Aorta (tissue), 5 donors: ENCODE measurements at regions of chr9 and their contacts with region 1.

Region 1: GRCh38 chr9:34126207-34127034 is at the start of gene DCAF12:
- DNase-seq: peak; percentile 95 to 97
- ATAC-seq: peak; percentile 98
- H3K4me3 ChIP-seq: peak within 1 kb of the TSS; percentile 74 to 91
- H3K27ac ChIP-seq: peak within 1 kb of the TSS; percentile 20 to 79
- H3K4me1 ChIP-seq: no peaks in the 10 kb centered on the region
- H3K27me3 ChIP-seq: no peaks in the 10 kb centered on the region
- total RNA-seq, gene DCAF12: 20.6 to 35.2 TPM

Region 2: DNA sequence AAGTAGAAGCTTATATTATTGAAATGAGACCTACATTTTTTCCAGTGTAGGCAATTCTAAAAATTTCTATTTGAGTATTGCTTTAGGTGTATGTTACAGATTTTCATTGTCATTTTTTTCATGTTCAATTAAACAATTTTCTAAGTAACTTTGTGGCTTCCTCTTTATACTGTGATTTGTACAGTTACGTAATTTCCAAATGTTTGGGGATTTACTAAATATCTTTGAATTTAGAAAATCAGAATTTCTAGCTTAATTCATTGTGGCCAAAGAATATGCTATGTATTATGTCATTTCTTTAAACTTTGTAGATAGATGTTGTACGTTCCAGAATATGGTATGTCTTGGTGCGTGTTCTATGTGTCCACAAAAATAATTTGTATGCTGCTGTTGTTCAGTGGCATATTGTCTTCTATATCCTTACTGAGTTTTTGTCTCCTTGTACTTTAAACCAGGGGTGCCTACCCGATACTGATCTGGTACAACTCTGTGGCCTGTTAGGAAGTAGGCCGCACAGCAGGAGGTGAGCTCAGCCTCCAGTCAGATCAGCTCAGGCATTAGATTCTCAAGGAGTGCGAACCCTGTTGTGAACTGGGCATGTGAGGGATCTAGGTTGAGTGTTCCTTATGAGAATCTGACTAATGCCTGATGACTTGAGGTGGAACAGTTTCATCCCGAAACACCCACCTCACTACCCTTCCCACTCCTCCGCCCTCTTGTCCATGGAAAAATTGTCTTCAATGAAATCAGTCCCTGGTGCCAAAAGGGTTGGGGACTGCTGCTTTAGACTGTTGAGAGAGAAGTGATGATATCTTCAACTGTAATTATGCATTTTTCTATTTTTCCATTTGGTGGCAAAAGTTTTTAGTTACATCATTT is 246.0 kb before region 1 on chr9:
- intact Hi-C with region 1: no loop called
- DNase-seq: no peak
- ATAC-seq: no peak
- H3K4me3 ChIP-seq: no peak overlapping the region
- H3K27ac ChIP-seq: no peak overlapping the region
- H3K4me1 ChIP-seq: peaks cover 2 to 5% of the 10 kb centered on the region in 2 donors
- H3K27me3 ChIP-seq: no peaks in the 10 kb centered on the region

Region 3: GRCh38 chr9:33964086-33964768 is 162.2 kb before region 1 on chr9:
- intact Hi-C with region 1: no loop called
- DNase-seq: no peak
- ATAC-seq: no peak
- H3K4me3 ChIP-seq: no peak overlapping the region
- H3K27ac ChIP-seq: no peak overlapping the region
- H3K4me1 ChIP-seq: no peaks in the 10 kb centered on the region
- H3K27me3 ChIP-seq: no peaks in the 10 kb centered on the region

Region 4: GRCh38 chr9:34048923-34049697 is 77.3 kb before region 1 on chr9:
- intact Hi-C with region 1: loop called in 1 of 2 experiments (anchors 5 kb)
- DNase-seq: peak; percentile 99 to 100
- ATAC-seq: peak; percentile 98
- H3K4me3 ChIP-seq: peak overlapping the region in 1 of 2 donors; percentile 54
- H3K27ac ChIP-seq: peak overlapping the region in 1 of 2 donors; percentile 87
- H3K4me1 ChIP-seq: no peaks in the 10 kb centered on the region
- H3K27me3 ChIP-seq: no peaks in the 10 kb centered on the region

Region 5: GRCh38 chr9:34059281-34059680 is 67.1 kb before region 1 on chr9:
- intact Hi-C with region 1: no loop called
- DNase-seq: no peak
- ATAC-seq: no peak
- H3K4me3 ChIP-seq: no peak overlapping the region
- H3K27ac ChIP-seq: no peak overlapping the region
- H3K4me1 ChIP-seq: no peaks in the 10 kb centered on the region
- H3K27me3 ChIP-seq: no peaks in the 10 kb centered on the region

Region 6: DNA sequence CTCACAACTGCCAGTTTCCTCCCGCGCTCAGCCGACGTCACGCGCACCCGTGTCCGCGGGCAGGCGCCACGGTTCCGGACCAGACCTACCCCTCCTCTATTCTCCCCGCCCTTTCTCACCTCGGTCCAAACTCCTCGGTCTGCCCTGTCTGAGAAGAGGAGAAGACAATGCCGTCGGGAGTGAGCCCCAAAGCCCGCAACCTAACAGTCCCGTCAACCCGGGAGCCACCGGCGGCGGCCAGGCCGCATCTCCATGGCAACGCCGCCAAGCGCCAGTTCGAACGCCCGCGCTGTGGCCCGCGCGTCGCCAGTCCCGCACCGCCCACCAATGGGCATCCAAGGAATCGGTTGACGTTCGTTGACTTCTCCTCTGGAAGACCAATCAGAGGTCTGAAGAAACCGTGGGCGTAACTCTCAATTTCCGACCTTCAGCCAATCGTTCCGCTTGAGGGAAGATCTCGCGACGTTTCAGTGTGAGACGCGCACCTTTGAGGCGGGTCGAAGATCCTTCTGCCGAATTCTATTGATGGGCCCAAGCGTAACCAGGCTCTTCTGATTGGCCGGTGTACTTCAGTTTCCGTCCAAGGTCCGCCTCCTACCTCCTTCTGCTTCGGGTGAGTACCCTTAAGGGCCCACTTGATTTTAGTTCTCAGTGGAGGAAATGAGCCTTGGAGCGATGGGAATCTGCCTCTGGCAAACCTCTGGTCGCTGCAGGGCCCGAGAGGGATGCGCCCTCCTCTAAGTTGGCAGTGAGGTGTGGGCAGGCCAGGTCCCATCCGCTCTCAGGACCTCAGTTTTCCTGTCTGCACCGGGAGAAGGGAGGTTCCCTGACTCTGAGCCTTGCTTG is 202.8 kb after region 1 on chr9 and contains the starts of genes KIF24 and NUDT2:
- intact Hi-C with region 1: loop called in 1 of 2 experiments (anchors 10 kb)
- DNase-seq: peak; percentile 98
- ATAC-seq: peak; percentile 98
- H3K4me3 ChIP-seq: peak within 1 kb of the TSS; percentile 76 to 84
- H3K27ac ChIP-seq: peak within 1 kb of the TSS in 1 of 2 donors; percentile 93
- H3K4me1 ChIP-seq: no peaks in the 10 kb centered on the region
- H3K27me3 ChIP-seq: no peaks in the 10 kb centered on the region
- total RNA-seq, gene KIF24: 0.32 to 0.78 TPM
- total RNA-seq, gene NUDT2: 13.6 to 17.1 TPM